ENCODE measurements at regions of chr6 and their contacts with region 1.

Region 1: GRCh38 chr6:139355172-139355571 is 19.3 kb downstream of the CITED2 start:
- DNase-seq: no peak
- H3K4me3 ChIP-seq: no peak overlapping the region
- H3K27ac ChIP-seq: no peak overlapping the region
- H3K4me1 ChIP-seq: peaks cover 8% of the 10 kb centered on the region
- CTCF ChIP-seq: no peak

Region 2: DNA sequence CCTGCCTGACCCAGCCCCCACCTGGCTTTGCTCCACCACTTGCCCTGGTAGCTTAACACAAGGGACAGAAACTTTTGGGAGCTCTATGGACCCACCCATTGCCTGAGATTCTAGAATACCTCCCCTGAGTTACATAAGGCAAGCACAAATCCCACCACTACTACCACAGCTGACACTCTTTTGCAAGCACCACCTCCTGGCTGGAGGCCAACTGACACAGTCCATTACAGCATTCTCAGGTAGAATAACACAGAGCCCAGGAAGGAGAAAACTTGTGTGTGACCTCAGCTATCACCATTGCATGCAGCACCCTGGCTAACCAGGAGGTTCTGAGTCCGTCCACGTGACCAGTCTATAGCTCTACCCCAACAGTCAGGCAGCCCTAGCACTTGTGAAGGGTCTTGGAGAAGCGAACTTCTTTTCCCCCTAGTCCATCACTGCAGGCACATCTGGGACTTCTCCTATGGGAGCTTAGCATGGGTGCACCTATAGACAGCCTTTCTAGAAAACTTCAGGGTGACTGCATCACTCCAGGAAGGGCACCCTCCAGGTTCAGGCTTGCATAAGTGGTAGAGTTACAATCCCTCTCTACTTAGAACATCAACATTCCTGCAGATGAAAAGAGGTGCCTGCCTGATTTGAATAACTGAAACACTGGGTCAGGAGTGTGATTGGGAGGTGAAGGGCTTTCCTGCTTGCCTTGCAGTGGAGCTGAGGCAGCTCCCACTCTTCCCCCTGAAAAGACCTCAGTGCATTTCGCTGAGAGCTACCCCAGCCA is 10.8 kb before region 1 on chr6:
- CTCF ChIA-PET with region 1: no interaction called
- POLR2A ChIA-PET with region 1: interaction called, 11 read pairs
- intact Hi-C with region 1: no loop called
- DNase-seq: no peak
- H3K4me3 ChIP-seq: no peak overlapping the region
- H3K27ac ChIP-seq: no peak overlapping the region
- H3K4me1 ChIP-seq: peaks cover 16% of the 10 kb centered on the region
- CTCF ChIP-seq: no peak

Region 3: DNA sequence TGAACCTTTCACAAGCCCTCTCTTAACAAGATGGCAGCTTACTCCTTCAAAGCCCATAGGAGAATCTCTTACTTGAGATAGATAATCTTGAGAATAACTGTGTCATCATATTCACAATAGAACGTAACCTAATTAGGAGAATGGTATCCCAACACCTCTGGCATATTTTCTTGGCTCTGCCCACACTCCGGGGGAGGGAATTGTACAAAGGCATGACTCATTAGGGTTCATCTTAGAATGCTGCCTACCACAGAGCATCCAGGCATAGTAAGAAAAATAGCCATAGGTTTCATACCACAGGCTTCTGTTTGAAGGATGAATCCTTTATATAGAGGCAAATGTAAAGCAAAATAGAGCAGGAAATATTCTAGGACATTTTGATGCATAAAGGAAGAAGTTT is 1119.9 kb after region 1 on chr6:
- CTCF ChIA-PET with region 1: no interaction called
- POLR2A ChIA-PET with region 1: no interaction called
- intact Hi-C with region 1: no loop called
- DNase-seq: no peak
- H3K4me3 ChIP-seq: no peak overlapping the region
- H3K27ac ChIP-seq: no peak overlapping the region
- H3K4me1 ChIP-seq: no peaks in the 10 kb centered on the region
- CTCF ChIP-seq: no peak